ENCODE measurements at regions of chr14 and their contacts with region 1.

Region 1: GRCh38 chr14:104976198-104977007 is 1.8 kb downstream of the AHNAK2 start:
- DNase-seq: peak; percentile 70
- ATAC-seq: peak; percentile 25
- H3K4me3 ChIP-seq: peak overlapping the region; percentile 75 to 80
- H3K27ac ChIP-seq: peak overlapping the region; percentile 77
- H3K4me1 ChIP-seq: peaks cover 69 to 90% of the 10 kb centered on the region in 2 experiments
- H3K27me3 ChIP-seq: no peaks in the 10 kb centered on the region
- CTCF ChIP-seq: peak in 2 of 3 experiments; percentile 75 to 88; a peak in 4 of 6 replicates
- POLR2A ChIP-seq: no peak
- RAD21 ChIP-seq: no peak

Region 2: GRCh38 chr14:104895786-104896661 is 80.4 kb before region 1 on chr14:
- CTCF ChIA-PET with region 1: interaction called, 4 read pairs
- POLR2A ChIA-PET with region 1: no interaction called
- RAD21 ChIA-PET with region 1: interaction called in 1 of 2 experiments, 3 read pairs
- intact Hi-C with region 1: loop called (anchors 2 kb)
- DNase-seq: no peak
- ATAC-seq: peak; percentile 28
- H3K4me3 ChIP-seq: no peak overlapping the region
- H3K27ac ChIP-seq: no peak overlapping the region
- H3K4me1 ChIP-seq: peaks cover 0 to 8% of the 10 kb centered on the region in 2 experiments; a peak in 1 of 4 replicates
- H3K27me3 ChIP-seq: no peaks in the 10 kb centered on the region
- CTCF ChIP-seq: no peak
- POLR2A ChIP-seq: no peak
- RAD21 ChIP-seq: no peak

Region 3: DNA sequence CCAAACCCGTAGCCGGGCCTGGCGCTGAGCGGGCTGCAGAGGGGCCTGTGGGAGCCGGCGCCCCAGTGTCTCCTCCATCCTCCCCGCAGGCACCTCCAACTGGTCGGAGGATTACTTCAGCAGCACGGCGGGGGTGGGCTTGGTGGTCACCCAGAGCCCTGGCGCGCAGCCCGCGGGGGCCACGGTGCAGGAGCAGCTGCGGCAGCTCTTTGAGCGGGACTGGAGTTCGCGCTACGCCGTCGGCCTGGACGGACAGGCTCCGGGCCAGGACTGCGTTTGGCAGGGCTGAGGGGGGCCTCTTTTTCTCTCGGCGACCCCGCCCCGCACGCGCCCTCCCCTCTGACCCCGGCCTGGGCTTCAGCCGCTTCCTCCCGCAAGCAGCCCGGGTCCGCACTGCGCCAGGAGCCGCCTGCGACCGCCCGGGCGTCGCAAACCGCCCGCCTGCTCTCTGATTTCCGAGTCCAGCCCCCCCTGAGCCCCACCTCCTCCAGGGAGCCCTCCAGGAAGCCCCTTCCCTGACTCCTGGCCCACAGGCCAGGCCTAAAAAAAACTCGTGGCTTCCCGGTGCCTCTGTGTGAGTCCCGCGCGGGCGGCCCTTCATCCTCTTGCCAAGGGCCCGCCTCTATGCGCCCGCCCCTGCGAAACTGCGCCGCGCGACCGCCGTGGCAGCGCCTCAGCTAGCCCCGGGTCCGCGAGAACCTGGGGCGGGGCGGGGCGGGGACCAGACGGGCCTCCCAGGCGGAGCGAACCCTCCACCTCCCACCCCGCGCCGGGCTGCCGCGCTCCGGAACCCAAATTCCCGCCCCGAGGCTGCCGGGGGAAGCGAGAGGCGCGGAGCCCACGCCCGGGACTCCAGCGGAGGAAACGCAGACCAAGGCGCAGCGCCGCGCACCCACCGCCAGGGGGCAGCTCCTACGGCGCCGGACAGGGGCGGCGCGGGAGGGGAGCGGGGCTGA is 43.4 kb before region 1 on chr14:
- CTCF ChIA-PET with region 1: interaction called, 18 read pairs
- POLR2A ChIA-PET with region 1: interaction called, 5 read pairs
- RAD21 ChIA-PET with region 1: interaction called, 3 read pairs
- intact Hi-C with region 1: no loop called
- DNase-seq: peak; percentile 38
- ATAC-seq: peak; percentile 91
- H3K4me3 ChIP-seq: peak overlapping the region; percentile 34 to 59
- H3K27ac ChIP-seq: peak overlapping the region; percentile 3; the same call in 1 of the 2 replicates
- H3K4me1 ChIP-seq: peaks cover 0 to 7% of the 10 kb centered on the region in 2 experiments; a peak in 1 of 4 replicates
- H3K27me3 ChIP-seq: no peaks in the 10 kb centered on the region
- CTCF ChIP-seq: peak; percentile 43 to 75 (median 73)
- POLR2A ChIP-seq: no peak
- RAD21 ChIP-seq: peak; percentile 69

Region 4: GRCh38 chr14:104953896-104954656 is 22.3 kb before region 1 on chr14:
- CTCF ChIA-PET with region 1: no interaction called
- POLR2A ChIA-PET with region 1: no interaction called
- RAD21 ChIA-PET with region 1: no interaction called
- intact Hi-C with region 1: no loop called
- DNase-seq: no peak
- ATAC-seq: no peak; the same call in 1 of the 2 replicates
- H3K4me3 ChIP-seq: no peak overlapping the region
- H3K27ac ChIP-seq: no peak overlapping the region
- H3K4me1 ChIP-seq: peaks cover 2 to 3% of the 10 kb centered on the region in 2 experiments; a peak in 2 of 4 replicates
- H3K27me3 ChIP-seq: no peaks in the 10 kb centered on the region
- CTCF ChIP-seq: no peak
- POLR2A ChIP-seq: no peak
- RAD21 ChIP-seq: no peak

Region 5: GRCh38 chr14:105020815-105021655 is 44.6 kb after region 1 on chr14 and contains the start of gene CDCA4:
- CTCF ChIA-PET with region 1: interaction called, 6 read pairs
- POLR2A ChIA-PET with region 1: interaction called, 10 read pairs
- RAD21 ChIA-PET with region 1: no interaction called
- intact Hi-C with region 1: loop called (anchors 2 kb)
- DNase-seq: peak; percentile 89
- ATAC-seq: peak; percentile 81
- H3K4me3 ChIP-seq: peak within 1 kb of the TSS; percentile 74 to 97
- H3K27ac ChIP-seq: peak within 1 kb of the TSS; percentile 95
- H3K4me1 ChIP-seq: peaks cover 47 to 76% of the 10 kb centered on the region in 2 experiments
- H3K27me3 ChIP-seq: no peaks in the 10 kb centered on the region
- CTCF ChIP-seq: no peak
- POLR2A ChIP-seq: no peak
- RAD21 ChIP-seq: no peak
- total RNA-seq, gene CDCA4: 62.4 TPM

Region 6: GRCh38 chr14:105045710-105046326 is 69.4 kb after region 1 on chr14:
- CTCF ChIA-PET with region 1: interaction called, 56 read pairs
- POLR2A ChIA-PET with region 1: interaction called, 3 read pairs
- RAD21 ChIA-PET with region 1: interaction called, 3 to 6 read pairs
- intact Hi-C with region 1: loop called (anchors 1 kb)
- DNase-seq: peak; percentile 69
- ATAC-seq: peak; percentile 90
- H3K4me3 ChIP-seq: peak overlapping the region in 1 of 2 experiments; percentile 35; a peak in 2 of 4 replicates
- H3K27ac ChIP-seq: no peak overlapping the region
- H3K4me1 ChIP-seq: peaks cover 10 to 27% of the 10 kb centered on the region in 2 experiments
- H3K27me3 ChIP-seq: no peaks in the 10 kb centered on the region
- CTCF ChIP-seq: peak; percentile 99 to 100 (median 100)
- POLR2A ChIP-seq: no peak
- RAD21 ChIP-seq: peak; percentile 99

Region 7: DNA sequence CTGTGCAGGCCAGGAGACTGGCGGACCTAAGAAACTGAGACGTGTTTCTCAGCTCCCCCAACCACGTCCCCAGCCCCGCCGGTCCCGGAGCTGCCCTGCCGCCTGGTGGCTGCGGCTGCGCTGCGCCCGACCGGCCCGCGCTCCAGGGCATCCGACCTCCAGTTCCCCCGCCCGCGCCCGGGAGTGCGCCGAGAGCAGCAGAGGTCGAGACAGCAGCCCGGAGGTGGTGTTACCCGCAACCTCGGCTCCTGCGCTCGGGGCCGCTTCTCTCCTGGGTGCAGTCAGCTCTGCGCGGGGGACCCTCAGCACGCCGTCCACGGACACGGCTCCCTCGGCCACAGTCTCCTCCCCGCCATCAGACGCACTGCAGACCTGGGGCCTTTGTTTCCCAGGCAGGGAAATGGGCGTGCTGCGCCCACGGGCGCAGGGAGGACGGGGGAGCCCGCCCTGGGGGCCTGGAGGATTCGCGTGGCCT is 110.5 kb after region 1 on chr14:
- CTCF ChIA-PET with region 1: interaction called, 7 read pairs
- POLR2A ChIA-PET with region 1: no interaction called
- RAD21 ChIA-PET with region 1: no interaction called
- intact Hi-C with region 1: loop called (anchors 5 kb)
- DNase-seq: peak; percentile 24
- ATAC-seq: peak; percentile 59
- H3K4me3 ChIP-seq: peak overlapping the region; percentile 53 to 66
- H3K27ac ChIP-seq: peak overlapping the region; percentile 73
- H3K4me1 ChIP-seq: peaks cover 45 to 67% of the 10 kb centered on the region in 2 experiments
- H3K27me3 ChIP-seq: no peaks in the 10 kb centered on the region
- CTCF ChIP-seq: peak in 2 of 3 experiments; percentile 72 to 92; a peak in 4 of 6 replicates
- POLR2A ChIP-seq: no peak
- RAD21 ChIP-seq: no peak

Region 8: GRCh38 chr14:105168979-105169507 is 192.6 kb after region 1 on chr14:
- CTCF ChIA-PET with region 1: no interaction called
- POLR2A ChIA-PET with region 1: no interaction called
- RAD21 ChIA-PET with region 1: no interaction called
- intact Hi-C with region 1: loop called (anchors 10 kb)
- DNase-seq: no peak
- ATAC-seq: peak; percentile 52
- H3K4me3 ChIP-seq: peak overlapping the region; percentile 19 to 48
- H3K27ac ChIP-seq: peak overlapping the region; percentile 50; the same call in 1 of the 2 replicates
- H3K4me1 ChIP-seq: peaks cover 45 to 62% of the 10 kb centered on the region in 2 experiments
- H3K27me3 ChIP-seq: no peaks in the 10 kb centered on the region
- CTCF ChIP-seq: peak in 2 of 3 experiments; percentile 58 to 60; a peak in 4 of 6 replicates
- POLR2A ChIP-seq: no peak
- RAD21 ChIP-seq: no peak